Naive thymus-derived CD4-positive, alpha-beta T cell (primary cell): ENCODE measurements at regions of chr1 and their contacts with region 1.

Region 1: GRCh38 chr1:110034451-110035235 is at the start of gene STRIP1:
- DNase-seq: peak; percentile 78 to 96 (median 93)
- ATAC-seq: peak; percentile 97
- H3K4me3 ChIP-seq: peak within 1 kb of the TSS; percentile 48
- H3K4me3 Mint-ChIP-seq: peak within 1 kb of the TSS; percentile 92 to 98 (median 95)
- H3K27ac ChIP-seq: peak within 1 kb of the TSS; percentile 97
- H3K27ac Mint-ChIP-seq: peak within 1 kb of the TSS; percentile 81 to 98 (median 95)
- H3K4me1 ChIP-seq: peaks cover 31% of the 10 kb centered on the region in 2 donors
- H3K4me1 Mint-ChIP-seq: peaks cover 32 to 70% (median 57%) of the 10 kb centered on the region in 7 donors
- H3K27me3 ChIP-seq: no peaks in the 10 kb centered on the region
- H3K27me3 Mint-ChIP-seq: no peaks in the 10 kb centered on the region
- total RNA-seq, gene STRIP1: 42.4 to 83.9 (median 70.7) TPM

Region 2: GRCh38 chr1:109426278-109427170 is 608.1 kb before region 1 on chr1 and contains the start of gene PSMA5:
- CTCF ChIA-PET with region 1: no interaction called
- POLR2A ChIA-PET with region 1: interaction called, 9 read pairs
- intact Hi-C with region 1: loop called in 1 of 2 experiments (anchors 1 kb)
- DNase-seq: peak; percentile 73 to 97 (median 95)
- ATAC-seq: peak; percentile 96
- H3K4me3 ChIP-seq: peak within 1 kb of the TSS; percentile 77
- H3K4me3 Mint-ChIP-seq: peak within 1 kb of the TSS; percentile 95 to 99 (median 98)
- H3K27ac ChIP-seq: peak within 1 kb of the TSS; percentile 91
- H3K27ac Mint-ChIP-seq: peak within 1 kb of the TSS; percentile 80 to 99 (median 98)
- H3K4me1 ChIP-seq: peaks cover 27 to 29% of the 10 kb centered on the region in 2 donors
- H3K4me1 Mint-ChIP-seq: peaks cover 29 to 46% (median 34%) of the 10 kb centered on the region in 7 donors
- H3K27me3 ChIP-seq: no peaks in the 10 kb centered on the region
- H3K27me3 Mint-ChIP-seq: no peaks in the 10 kb centered on the region
- total RNA-seq, gene PSMA5: 38.3 to 203 (median 70.7) TPM

Region 3: DNA sequence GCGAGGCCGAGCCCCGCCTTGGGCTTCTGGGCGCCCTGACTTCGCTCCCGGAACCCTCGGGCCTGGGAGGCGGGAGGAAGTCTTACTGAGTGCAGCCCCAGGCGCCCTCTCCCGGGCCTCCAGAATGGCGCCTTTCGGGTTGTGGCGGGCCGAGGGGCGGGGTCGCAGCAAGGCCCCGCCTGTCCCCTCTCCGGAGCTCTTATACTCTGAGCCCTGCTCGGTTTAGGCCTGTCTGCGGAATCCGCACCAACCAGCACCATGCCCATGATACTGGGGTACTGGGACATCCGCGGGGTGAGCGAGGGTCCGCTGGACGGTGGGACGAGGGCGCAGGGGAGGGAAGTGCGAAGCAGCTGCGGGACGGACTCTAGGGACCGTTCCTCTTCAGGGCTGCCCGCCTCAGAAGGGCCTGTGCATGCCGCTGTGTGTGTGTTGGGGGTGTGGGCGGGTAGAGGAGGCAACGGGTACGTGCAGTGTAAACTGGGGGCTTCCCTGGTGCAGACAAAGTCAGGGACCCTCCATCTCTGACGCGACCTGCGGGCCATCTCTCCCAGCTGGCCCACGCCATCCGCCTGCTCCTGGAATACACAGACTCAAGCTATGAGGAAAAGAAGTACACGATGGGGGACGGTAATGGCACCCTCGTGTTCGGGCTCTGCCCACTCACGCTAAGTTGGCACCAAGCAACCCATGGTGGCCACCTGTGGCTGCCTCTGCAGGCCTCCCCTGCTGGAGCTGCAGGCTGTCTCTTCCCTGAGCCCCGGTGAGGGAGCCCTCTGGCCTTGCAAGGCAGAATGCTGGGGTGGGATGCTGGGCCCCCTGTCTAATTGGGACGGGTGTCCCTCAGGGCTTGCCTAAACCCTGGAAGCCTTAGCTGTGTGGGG is 346.8 kb before region 1 on chr1 and contains the start of gene GSTM1:
- CTCF ChIA-PET with region 1: no interaction called
- POLR2A ChIA-PET with region 1: no interaction called
- intact Hi-C with region 1: loop called in 1 of 2 experiments (anchors 2 kb)
- DNase-seq: peak in 5 of 9 donors; percentile 74 to 89 (median 82)
- ATAC-seq: no peak
- H3K4me3 ChIP-seq: no peak within 1 kb of the TSS
- H3K4me3 Mint-ChIP-seq: peak within 1 kb of the TSS in 7 of 10 donors; percentile 81 to 99 (median 90)
- H3K27ac ChIP-seq: peak within 1 kb of the TSS; percentile 70
- H3K27ac Mint-ChIP-seq: peak within 1 kb of the TSS in 6 of 9 donors; percentile 88 to 96 (median 94)
- H3K4me1 ChIP-seq: no peaks in the 10 kb centered on the region
- H3K4me1 Mint-ChIP-seq: peaks cover 0 to 27% (median 8%) of the 10 kb centered on the region in 7 donors
- H3K27me3 ChIP-seq: no peaks in the 10 kb centered on the region
- H3K27me3 Mint-ChIP-seq: no peaks in the 10 kb centered on the region
- total RNA-seq, gene GSTM1: 45.9 to 83.6 TPM in 2 of 5 experiments, not detected in the others

Region 4: DNA sequence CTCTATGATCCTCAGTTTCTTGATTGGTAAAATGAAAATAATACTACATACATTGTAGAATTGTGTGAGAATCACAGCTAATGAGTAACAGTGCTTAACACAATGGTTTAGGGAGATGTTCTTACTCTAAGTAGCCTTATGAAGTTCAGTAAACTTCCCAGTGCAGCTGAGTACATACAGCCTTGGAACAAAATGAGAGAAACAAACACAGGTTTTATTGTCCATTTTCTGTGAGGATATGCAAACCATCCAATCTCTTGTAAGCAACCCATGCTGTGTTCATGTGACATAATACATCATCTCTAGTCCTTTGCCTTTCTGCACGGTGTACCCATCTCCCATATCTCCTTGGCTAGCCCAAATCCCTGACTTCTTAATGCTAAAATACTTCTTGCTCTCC is 14.9 kb before region 1 on chr1:
- CTCF ChIA-PET with region 1: interaction called, 12 read pairs
- POLR2A ChIA-PET with region 1: interaction called, 3 read pairs
- intact Hi-C with region 1: no loop called
- DNase-seq: no peak
- ATAC-seq: no peak
- H3K4me3 ChIP-seq: no peak overlapping the region
- H3K4me3 Mint-ChIP-seq: no peak overlapping the region
- H3K27ac ChIP-seq: no peak overlapping the region
- H3K27ac Mint-ChIP-seq: no peak overlapping the region
- H3K4me1 ChIP-seq: no peaks in the 10 kb centered on the region
- H3K4me1 Mint-ChIP-seq: no peaks in the 10 kb centered on the region
- H3K27me3 ChIP-seq: no peaks in the 10 kb centered on the region
- H3K27me3 Mint-ChIP-seq: no peaks in the 10 kb centered on the region

Region 5: GRCh38 chr1:110106013-110106941 is 71.6 kb after region 1 on chr1:
- CTCF ChIA-PET with region 1: no interaction called
- POLR2A ChIA-PET with region 1: no interaction called
- intact Hi-C with region 1: loop called (anchors 1 to 2 kb)
- DNase-seq: peak; percentile 19 to 53 (median 47)
- ATAC-seq: peak; percentile 85
- H3K4me3 ChIP-seq: no peak overlapping the region
- H3K4me3 Mint-ChIP-seq: no peak overlapping the region
- H3K27ac ChIP-seq: no peak overlapping the region
- H3K27ac Mint-ChIP-seq: no peak overlapping the region
- H3K4me1 ChIP-seq: no peaks in the 10 kb centered on the region
- H3K4me1 Mint-ChIP-seq: peaks cover 0 to 6% (median 0%) of the 10 kb centered on the region in 7 donors
- H3K27me3 ChIP-seq: no peaks in the 10 kb centered on the region
- H3K27me3 Mint-ChIP-seq: peaks cover 6 to 20% (median 10%) of the 10 kb centered on the region in 5 donors

Region 6: GRCh38 chr1:110281363-110282290 is 247.0 kb after region 1 on chr1:
- CTCF ChIA-PET with region 1: no interaction called
- POLR2A ChIA-PET with region 1: no interaction called
- intact Hi-C with region 1: no loop called
- DNase-seq: no peak
- ATAC-seq: no peak
- H3K4me3 ChIP-seq: no peak overlapping the region
- H3K4me3 Mint-ChIP-seq: no peak overlapping the region
- H3K27ac ChIP-seq: no peak overlapping the region
- H3K27ac Mint-ChIP-seq: no peak overlapping the region
- H3K4me1 ChIP-seq: no peaks in the 10 kb centered on the region
- H3K4me1 Mint-ChIP-seq: no peaks in the 10 kb centered on the region
- H3K27me3 ChIP-seq: no peaks in the 10 kb centered on the region
- H3K27me3 Mint-ChIP-seq: peaks cover 0 to 4% (median 0%) of the 10 kb centered on the region in 5 donors

Region 7: GRCh38 chr1:110460253-110461220 is 425.9 kb after region 1 on chr1:
- CTCF ChIA-PET with region 1: interaction called, 7 read pairs
- POLR2A ChIA-PET with region 1: no interaction called
- intact Hi-C with region 1: loop called in 1 of 2 experiments (anchors 1 kb)
- DNase-seq: peak; percentile 66 to 91 (median 83)
- ATAC-seq: peak; percentile 96
- H3K4me3 ChIP-seq: no peak overlapping the region
- H3K4me3 Mint-ChIP-seq: no peak overlapping the region
- H3K27ac ChIP-seq: no peak overlapping the region
- H3K27ac Mint-ChIP-seq: no peak overlapping the region
- H3K4me1 ChIP-seq: no peaks in the 10 kb centered on the region
- H3K4me1 Mint-ChIP-seq: no peaks in the 10 kb centered on the region
- H3K27me3 ChIP-seq: no peaks in the 10 kb centered on the region
- H3K27me3 Mint-ChIP-seq: no peaks in the 10 kb centered on the region

Region 8: DNA sequence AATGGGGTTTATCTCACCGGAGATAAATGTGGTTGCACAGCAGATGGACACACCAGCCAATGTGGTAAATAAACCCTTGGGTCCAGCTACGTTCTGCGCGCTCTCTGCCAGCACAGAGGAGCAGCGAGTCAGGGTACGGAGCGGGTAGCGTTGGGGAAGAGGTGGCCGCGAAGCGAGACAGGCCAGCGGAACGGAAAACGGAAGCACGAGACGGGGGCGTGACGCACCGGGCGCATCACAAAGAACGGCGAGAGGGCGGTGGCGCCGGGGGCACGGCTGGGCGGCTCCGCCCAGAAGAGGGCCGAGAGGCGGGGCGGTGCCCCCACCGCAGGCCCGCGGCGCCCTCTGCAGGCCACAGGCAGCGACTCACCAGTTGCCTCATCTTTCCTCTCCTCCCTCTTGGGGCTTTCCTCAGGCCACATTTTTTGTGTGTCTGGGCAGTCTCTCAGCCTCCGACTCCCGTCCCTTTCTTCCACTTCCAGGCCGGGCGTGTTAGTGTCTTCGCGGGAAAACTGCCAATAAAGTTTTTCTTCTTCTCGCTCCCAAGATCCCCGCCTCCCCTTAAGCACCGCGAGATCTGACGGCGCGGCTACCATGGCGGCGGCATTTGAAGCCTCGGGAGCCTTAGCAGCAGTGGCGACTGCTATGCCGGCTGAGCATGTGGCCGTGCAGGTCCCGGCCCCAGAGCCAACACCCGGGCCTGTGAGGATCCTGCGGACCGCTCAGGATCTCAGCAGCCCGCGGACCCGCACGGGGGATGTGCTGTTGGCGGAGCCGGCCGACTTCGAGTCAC is 1720.9 kb after region 1 on chr1 and contains the start of gene DDX20:
- CTCF ChIA-PET with region 1: no interaction called
- POLR2A ChIA-PET with region 1: no interaction called
- intact Hi-C with region 1: loop called (anchors 5 kb)
- DNase-seq: peak; percentile 92 to 97 (median 95)
- ATAC-seq: peak; percentile 97
- H3K4me3 ChIP-seq: peak within 1 kb of the TSS; percentile 87
- H3K4me3 Mint-ChIP-seq: peak within 1 kb of the TSS; percentile 86 to 100 (median 94)
- H3K27ac ChIP-seq: peak within 1 kb of the TSS; percentile 92
- H3K27ac Mint-ChIP-seq: peak within 1 kb of the TSS; percentile 94 to 100 (median 99)
- H3K4me1 ChIP-seq: peaks cover 4 to 18% of the 10 kb centered on the region in 2 donors
- H3K4me1 Mint-ChIP-seq: peaks cover 24 to 49% (median 39%) of the 10 kb centered on the region in 7 donors
- H3K27me3 ChIP-seq: no peaks in the 10 kb centered on the region
- H3K27me3 Mint-ChIP-seq: peaks cover 0 to 2% (median 0%) of the 10 kb centered on the region in 5 donors
- total RNA-seq, gene DDX20: 12.7 to 27.0 (median 18.7) TPM